ENCODE measurements at regions of chr7 and their contacts with region 1.

Region 1: DNA sequence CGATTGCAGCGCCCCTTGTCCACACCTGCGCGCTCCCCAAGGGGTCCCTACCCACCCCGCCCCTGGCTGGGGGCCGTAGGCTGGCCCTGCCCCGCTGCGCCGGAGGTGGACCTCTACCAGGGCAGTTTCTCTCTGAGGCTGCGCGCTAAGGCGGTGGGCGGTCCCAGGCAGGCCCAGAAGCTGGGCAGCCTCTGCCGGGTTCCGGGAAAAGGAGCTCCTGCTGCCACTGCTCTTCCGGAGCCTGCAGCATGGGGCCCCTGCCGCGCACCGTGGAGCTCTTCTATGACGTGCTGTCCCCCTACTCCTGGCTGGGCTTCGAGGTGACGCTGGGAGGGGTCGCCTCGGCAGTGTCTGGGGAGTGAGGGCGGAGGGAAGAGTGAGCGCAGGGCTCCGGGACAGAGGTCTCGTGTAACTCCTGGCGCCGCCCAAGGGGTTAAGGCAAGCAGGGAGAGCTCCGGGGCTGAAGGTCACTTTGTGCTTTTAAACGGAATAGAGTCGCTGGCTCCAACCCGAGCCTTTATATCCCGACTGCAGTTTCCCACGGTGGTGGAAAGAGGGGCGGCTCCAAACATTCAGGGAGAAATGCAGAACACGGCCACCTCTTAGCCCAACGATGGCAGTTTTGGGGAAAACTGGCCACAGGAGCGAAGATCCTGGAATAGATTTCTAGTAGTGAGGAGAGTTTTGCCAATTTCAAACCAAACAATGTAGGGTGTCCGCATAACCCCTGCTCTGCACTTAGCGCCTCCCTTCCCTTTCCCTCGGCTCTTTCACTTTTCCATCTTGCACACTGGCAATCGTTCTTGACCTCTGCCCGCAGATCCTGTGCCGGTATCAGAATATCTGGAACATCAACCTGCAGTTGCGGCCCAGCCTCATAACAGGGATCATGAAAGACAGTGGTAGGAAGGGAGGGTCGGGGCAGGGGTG is at the start of gene GSTK1:
- DNase-seq: peak; percentile 88 to 95 (median 91)
- ATAC-seq: peak; percentile 97
- H3K4me3 ChIP-seq: peak within 1 kb of the TSS; percentile 59
- H3K27ac ChIP-seq: peak within 1 kb of the TSS; percentile 74
- H3K4me1 ChIP-seq: peaks cover 24 to 29% of the 10 kb centered on the region in 2 experiments
- H3K27me3 ChIP-seq: no peaks in the 10 kb centered on the region
- CTCF ChIP-seq: 0 out of 6 replicates have a peak, but pooled peaks of 1 of the 3 experiments have one; percentile 0
- EP300 ChIP-seq: peak; percentile 43; the same call in 1 of the 2 replicates
- POLR2A ChIP-seq: peak; percentile 99
- RAD21 ChIP-seq: no peak
- polyA plus RNA-seq, gene GSTK1: 392 to 441 TPM

Region 2: GRCh38 chr7:143279186-143280098 is 15.9 kb after region 1 on chr7:
- CTCF ChIA-PET with region 1: no interaction called
- POLR2A ChIA-PET with region 1: interaction called, 11 read pairs
- in situ Hi-C with region 1: no loop called
- intact Hi-C with region 1: no loop called
- DNase-seq: no peak
- ATAC-seq: peak; percentile 11; the same call in 2 of the 3 replicates
- H3K4me3 ChIP-seq: no peak overlapping the region
- H3K27ac ChIP-seq: no peak overlapping the region
- H3K4me1 ChIP-seq: peaks cover 0 to 9% of the 10 kb centered on the region in 2 experiments; a peak in 3 of 5 replicates
- H3K27me3 ChIP-seq: no peaks in the 10 kb centered on the region
- CTCF ChIP-seq: no peak
- EP300 ChIP-seq: no peak
- POLR2A ChIP-seq: no peak
- RAD21 ChIP-seq: no peak

Region 3: DNA sequence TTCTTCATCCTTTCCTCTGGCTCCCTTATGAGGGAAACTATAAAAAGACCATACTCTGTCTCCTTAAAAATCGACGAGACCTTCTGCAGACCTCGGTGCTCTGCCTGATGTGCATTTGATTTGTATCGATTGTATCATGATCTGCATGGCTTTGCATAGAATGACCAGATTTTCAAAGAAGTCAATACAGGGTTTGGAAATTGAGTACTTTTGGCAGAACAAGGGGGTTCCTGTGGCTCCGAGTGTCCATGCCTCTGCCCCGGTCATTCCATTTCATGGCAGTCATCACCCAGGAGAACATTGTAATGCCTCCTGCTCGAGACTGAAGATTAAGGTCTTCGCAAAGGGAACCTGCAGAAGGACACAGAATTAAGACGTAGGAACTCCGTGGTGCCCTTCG is 25.3 kb after region 1 on chr7:
- CTCF ChIA-PET with region 1: no interaction called
- POLR2A ChIA-PET with region 1: interaction called, 6 read pairs
- in situ Hi-C with region 1: no loop called
- intact Hi-C with region 1: loop called (anchors 1 kb)
- DNase-seq: peak in 2 of 4 experiments; percentile 39 to 41
- ATAC-seq: peak; percentile 4
- H3K4me3 ChIP-seq: peak overlapping the region; percentile 87
- H3K27ac ChIP-seq: peak overlapping the region; percentile 96
- H3K4me1 ChIP-seq: peaks cover 24 to 28% of the 10 kb centered on the region in 2 experiments; a peak in 4 of 5 replicates
- H3K27me3 ChIP-seq: no peaks in the 10 kb centered on the region
- CTCF ChIP-seq: no peak
- EP300 ChIP-seq: no peak
- POLR2A ChIP-seq: no peak
- RAD21 ChIP-seq: no peak